Vagina (tissue), 2 donors: ENCODE measurements at regions of chr11 and their contacts with region 1.

Region 1: DNA sequence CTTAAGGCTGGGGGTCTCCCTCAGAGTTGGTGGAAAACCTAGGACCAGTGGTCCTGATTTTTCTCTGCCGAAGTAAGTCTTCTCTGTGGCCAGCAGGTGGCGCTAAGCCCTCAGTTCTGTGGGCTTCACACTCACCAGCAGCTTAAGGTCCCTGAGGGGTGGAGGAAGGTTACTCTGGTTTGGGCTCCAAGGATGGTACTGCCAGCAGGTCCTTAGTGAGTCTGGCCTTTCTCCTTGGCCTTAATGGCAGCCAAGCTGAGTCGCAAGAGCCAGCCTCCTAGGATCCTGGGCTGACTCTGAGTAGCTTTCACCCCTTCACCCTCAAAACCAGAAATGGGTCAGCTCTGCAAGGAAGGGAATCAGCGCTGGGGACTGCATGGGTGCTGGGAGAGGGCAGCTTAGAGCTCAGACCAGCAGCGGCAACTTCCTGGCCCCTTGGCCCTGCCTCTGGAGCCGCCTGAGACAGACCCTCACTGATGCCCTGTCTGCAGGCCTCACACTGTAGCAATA is 4.4 kb downstream of the KCNJ11 start:
- DNase-seq: no peak
- H3K4me3 ChIP-seq: no peak overlapping the region
- H3K27ac ChIP-seq: no peak overlapping the region
- H3K4me1 ChIP-seq: peaks cover 5% of the 10 kb centered on the region
- H3K27me3 ChIP-seq: no peaks in the 10 kb centered on the region
- CTCF ChIP-seq: peak; percentile 77 to 92 (median 87)
- POLR2A ChIP-seq: no peak

Region 2: DNA sequence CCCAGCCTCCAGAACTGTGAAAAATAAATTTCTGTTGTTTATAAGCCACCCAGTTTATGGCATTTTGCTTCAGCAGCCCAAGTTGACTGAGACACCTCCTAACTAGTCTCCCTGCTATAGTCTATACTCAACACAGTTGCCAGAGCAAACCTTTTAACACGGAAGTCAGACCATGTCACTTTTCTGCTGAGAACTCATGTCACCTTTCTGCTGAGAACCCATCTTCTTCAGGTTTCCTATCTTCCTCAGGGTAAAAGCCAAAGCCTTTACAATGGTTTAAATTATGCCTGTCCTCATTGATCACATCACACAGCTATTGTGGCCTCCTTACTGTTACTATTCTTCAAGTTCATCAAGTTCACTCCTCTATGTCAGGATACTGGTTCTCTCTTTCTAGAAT is 953.4 kb before region 1 on chr11:
- intact Hi-C with region 1: no loop called
- DNase-seq: no peak
- H3K4me3 ChIP-seq: no peak overlapping the region
- H3K27ac ChIP-seq: no peak overlapping the region
- H3K4me1 ChIP-seq: no peaks in the 10 kb centered on the region
- H3K27me3 ChIP-seq: no peaks in the 10 kb centered on the region
- CTCF ChIP-seq: no peak
- POLR2A ChIP-seq: no peak

Region 3: GRCh38 chr11:17504330-17505107 is 120.5 kb after region 1 on chr11:
- intact Hi-C with region 1: loop called (anchors 2 kb)
- DNase-seq: no peak
- H3K4me3 ChIP-seq: no peak overlapping the region
- H3K27ac ChIP-seq: no peak overlapping the region
- H3K4me1 ChIP-seq: no peaks in the 10 kb centered on the region
- H3K27me3 ChIP-seq: no peaks in the 10 kb centered on the region
- CTCF ChIP-seq: peak; percentile 35 to 86 (median 82)
- POLR2A ChIP-seq: no peak